Common myeloid progenitor, CD34-positive (primary cell): ENCODE measurements at regions of chr5 and their contacts with region 1.

Region 1: GRCh38 chr5:126544087-126544740 is 50.8 kb downstream of the ALDH7A1 start:
- DNase-seq: peak; percentile 37 to 67 (median 60)
- H3K4me3 ChIP-seq: no peak overlapping the region
- H3K27ac ChIP-seq: no peak overlapping the region
- H3K4me1 ChIP-seq: peaks cover 0 to 3% (median 1%) of the 10 kb centered on the region in 4 experiments
- H3K27me3 ChIP-seq: no peaks in the 10 kb centered on the region

Region 2: DNA sequence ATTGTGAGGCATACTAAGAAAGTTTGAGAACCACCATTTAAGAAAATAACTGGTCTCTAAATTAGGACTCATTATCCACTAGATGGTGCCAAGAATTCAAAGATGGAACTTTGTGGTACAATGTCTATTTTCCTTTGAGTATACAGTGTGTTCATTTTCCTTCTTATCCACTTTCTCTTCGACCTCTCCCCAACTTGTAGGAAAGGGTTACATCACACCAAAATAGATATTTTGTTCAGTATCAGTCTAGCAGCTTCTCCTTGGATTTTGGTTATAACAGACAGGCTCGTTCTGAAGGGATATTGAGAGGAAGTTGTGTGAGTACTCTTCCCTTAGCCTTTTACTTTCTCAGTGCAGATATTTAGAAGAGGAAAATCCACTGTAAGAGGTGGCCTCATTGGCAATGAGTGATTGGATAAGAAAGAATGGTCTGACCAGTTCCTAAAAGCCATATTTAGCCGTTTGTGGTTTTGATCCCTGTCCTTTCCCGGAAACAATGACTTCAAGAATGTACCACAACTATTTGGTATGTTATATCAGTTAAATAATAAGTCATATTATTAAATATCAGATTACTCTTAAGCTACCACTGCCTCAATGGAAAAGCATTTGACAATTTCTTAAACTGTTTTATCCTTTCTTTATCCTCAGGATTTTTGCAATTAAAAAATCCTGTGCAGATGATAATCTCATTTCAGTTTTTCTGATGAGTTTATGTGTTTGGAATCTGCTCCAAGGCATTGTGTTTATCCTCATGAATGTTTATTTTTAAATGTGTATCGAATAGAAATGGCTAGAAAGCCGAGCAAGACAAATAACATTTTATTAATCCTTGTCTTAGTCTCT is 190.0 kb before region 1 on chr5:
- CTCF ChIA-PET with region 1: interaction called, 13 read pairs
- POLR2A ChIA-PET with region 1: no interaction called
- DNase-seq: peak; percentile 38 to 62 (median 60)
- H3K4me3 ChIP-seq: peak overlapping the region in 6 of 7 experiments; percentile 15 to 72 (median 44)
- H3K27ac ChIP-seq: peak overlapping the region in 1 of 2 experiments; percentile 9
- H3K4me1 ChIP-seq: peaks cover 0 to 30% (median 5%) of the 10 kb centered on the region in 4 experiments
- H3K27me3 ChIP-seq: peaks cover 0 to 6% (median 0%) of the 10 kb centered on the region in 5 experiments

Region 3: GRCh38 chr5:126641387-126641786 is 97.2 kb after region 1 on chr5:
- CTCF ChIA-PET with region 1: no interaction called
- POLR2A ChIA-PET with region 1: no interaction called
- DNase-seq: no peak
- H3K4me3 ChIP-seq: no peak overlapping the region
- H3K27ac ChIP-seq: no peak overlapping the region
- H3K4me1 ChIP-seq: no peaks in the 10 kb centered on the region
- H3K27me3 ChIP-seq: no peaks in the 10 kb centered on the region